Aorta (tissue), 5 donors: ENCODE measurements at regions of chr7 and their contacts with region 1.

Region 1: GRCh38 chr7:92025260-92025659 is 84.6 kb downstream of the AKAP9 start:
- DNase-seq: no peak
- ATAC-seq: no peak
- H3K4me3 ChIP-seq: no peak overlapping the region
- H3K27ac ChIP-seq: no peak overlapping the region
- H3K4me1 ChIP-seq: no peaks in the 10 kb centered on the region
- H3K27me3 ChIP-seq: no peaks in the 10 kb centered on the region

Region 2: GRCh38 chr7:91940572-91941341 is 84.5 kb before region 1 on chr7 and contains the start of gene AKAP9:
- intact Hi-C with region 1: loop called in 1 of 2 experiments (anchors 10 kb)
- DNase-seq: peak; percentile 92 to 95
- ATAC-seq: peak; percentile 95
- H3K4me3 ChIP-seq: peak within 1 kb of the TSS; percentile 72 to 77
- H3K27ac ChIP-seq: peak within 1 kb of the TSS; percentile 51 to 76
- H3K4me1 ChIP-seq: no peaks in the 10 kb centered on the region
- H3K27me3 ChIP-seq: no peaks in the 10 kb centered on the region
- total RNA-seq, gene AKAP9: 55.5 to 81.2 TPM

Region 3: GRCh38 chr7:92061154-92061553 is 35.9 kb after region 1 on chr7:
- intact Hi-C with region 1: no loop called
- DNase-seq: no peak
- ATAC-seq: no peak
- H3K4me3 ChIP-seq: no peak overlapping the region
- H3K27ac ChIP-seq: no peak overlapping the region
- H3K4me1 ChIP-seq: peaks cover 2 to 5% of the 10 kb centered on the region in 2 donors
- H3K27me3 ChIP-seq: no peaks in the 10 kb centered on the region

Region 4: GRCh38 chr7:92108821-92109220 is 83.6 kb after region 1 on chr7:
- intact Hi-C with region 1: no loop called
- DNase-seq: no peak
- ATAC-seq: no peak
- H3K4me3 ChIP-seq: no peak overlapping the region
- H3K27ac ChIP-seq: no peak overlapping the region
- H3K4me1 ChIP-seq: no peaks in the 10 kb centered on the region
- H3K27me3 ChIP-seq: no peaks in the 10 kb centered on the region

Region 5: GRCh38 chr7:92158660-92159575 is 133.7 kb after region 1 on chr7:
- intact Hi-C with region 1: no loop called
- DNase-seq: no peak
- ATAC-seq: no peak
- H3K4me3 ChIP-seq: no peak overlapping the region
- H3K27ac ChIP-seq: no peak overlapping the region
- H3K4me1 ChIP-seq: no peaks in the 10 kb centered on the region
- H3K27me3 ChIP-seq: no peaks in the 10 kb centered on the region

Region 6: DNA sequence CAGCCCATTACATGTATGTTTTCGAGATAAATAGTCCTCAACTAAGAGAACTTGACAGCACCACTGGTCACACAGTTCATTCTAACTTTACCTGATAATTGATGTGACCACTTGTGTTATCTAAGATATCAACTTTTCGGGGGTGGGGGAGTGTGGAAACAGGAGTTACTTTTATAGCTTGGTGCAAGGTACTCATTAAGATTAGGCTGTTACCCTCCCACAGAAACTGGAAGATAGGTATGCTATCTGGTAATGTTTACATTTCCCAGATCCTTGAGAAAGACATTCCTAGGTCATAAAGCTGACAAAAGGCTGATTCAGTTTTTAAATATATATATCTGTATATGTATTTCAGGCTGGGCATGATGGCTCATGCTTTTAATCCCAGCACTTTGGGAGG is 441.4 kb after region 1 on chr7:
- intact Hi-C with region 1: no loop called
- DNase-seq: no peak
- ATAC-seq: no peak
- H3K4me3 ChIP-seq: no peak overlapping the region
- H3K27ac ChIP-seq: no peak overlapping the region
- H3K4me1 ChIP-seq: no peaks in the 10 kb centered on the region
- H3K27me3 ChIP-seq: no peaks in the 10 kb centered on the region